Caco-2 (cell line): ENCODE measurements at regions of chr5 and their contacts with region 1.

Region 1: GRCh38 chr5:109688971-109689739 is 572 bp upstream of the MAN2A1 start:
- DNase-seq: peak; percentile 89 to 92
- H3K4me3 ChIP-seq: peak overlapping the region; percentile 86
- H3K4me3 Mint-ChIP-seq: peak overlapping the region; percentile 94
- H3K27ac Mint-ChIP-seq: peak overlapping the region; percentile 98
- H3K4me1 ChIP-seq: 0 out of 2 replicates have a peak, but pooled peaks cover 6% of the 10 kb centered on the region
- H3K4me1 Mint-ChIP-seq: peaks cover 15% of the 10 kb centered on the region
- H3K27me3 ChIP-seq: no peaks in the 10 kb centered on the region
- H3K27me3 Mint-ChIP-seq: no peaks in the 10 kb centered on the region
- CTCF ChIP-seq: no peak

Region 2: GRCh38 chr5:108481355-108481931 is 1207.7 kb before region 1 on chr5:
- CTCF ChIA-PET with region 1: no interaction called
- POLR2A ChIA-PET with region 1: no interaction called
- intact Hi-C with region 1: loop called (anchors 2 kb)
- DNase-seq: peak; percentile 35 to 51
- H3K4me3 ChIP-seq: no peak overlapping the region
- H3K4me3 Mint-ChIP-seq: no peak overlapping the region
- H3K27ac Mint-ChIP-seq: no peak overlapping the region
- H3K4me1 ChIP-seq: no peaks in the 10 kb centered on the region
- H3K4me1 Mint-ChIP-seq: no peaks in the 10 kb centered on the region
- H3K27me3 ChIP-seq: no peaks in the 10 kb centered on the region
- H3K27me3 Mint-ChIP-seq: peaks cover 10% of the 10 kb centered on the region
- CTCF ChIP-seq: peak; percentile 44 to 51

Region 3: DNA sequence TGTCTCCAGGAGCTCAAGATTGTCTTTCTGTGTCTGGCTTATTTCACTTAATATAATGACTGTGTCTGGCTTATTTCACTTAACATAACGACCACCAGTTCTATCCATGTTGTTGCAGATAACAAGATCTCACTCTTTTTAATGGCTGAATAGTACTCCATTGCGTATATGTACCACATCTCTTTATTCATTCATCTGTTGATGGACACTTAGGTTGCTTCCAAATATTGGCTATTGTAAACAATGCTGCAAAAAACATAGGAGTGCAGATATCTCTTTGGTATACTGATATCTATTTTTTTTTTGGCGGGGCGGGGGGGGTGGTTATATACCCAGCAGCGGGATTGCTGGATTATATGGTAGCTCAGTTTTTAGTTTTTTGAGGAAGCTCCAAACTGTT is 895.9 kb before region 1 on chr5:
- CTCF ChIA-PET with region 1: no interaction called
- POLR2A ChIA-PET with region 1: interaction called, 10 read pairs
- intact Hi-C with region 1: no loop called
- DNase-seq: no peak
- H3K4me3 ChIP-seq: no peak overlapping the region
- H3K4me3 Mint-ChIP-seq: no peak overlapping the region
- H3K27ac Mint-ChIP-seq: no peak overlapping the region
- H3K4me1 ChIP-seq: no peaks in the 10 kb centered on the region
- H3K4me1 Mint-ChIP-seq: no peaks in the 10 kb centered on the region
- H3K27me3 ChIP-seq: no peaks in the 10 kb centered on the region
- H3K27me3 Mint-ChIP-seq: no peaks in the 10 kb centered on the region
- CTCF ChIP-seq: no peak

Region 4: DNA sequence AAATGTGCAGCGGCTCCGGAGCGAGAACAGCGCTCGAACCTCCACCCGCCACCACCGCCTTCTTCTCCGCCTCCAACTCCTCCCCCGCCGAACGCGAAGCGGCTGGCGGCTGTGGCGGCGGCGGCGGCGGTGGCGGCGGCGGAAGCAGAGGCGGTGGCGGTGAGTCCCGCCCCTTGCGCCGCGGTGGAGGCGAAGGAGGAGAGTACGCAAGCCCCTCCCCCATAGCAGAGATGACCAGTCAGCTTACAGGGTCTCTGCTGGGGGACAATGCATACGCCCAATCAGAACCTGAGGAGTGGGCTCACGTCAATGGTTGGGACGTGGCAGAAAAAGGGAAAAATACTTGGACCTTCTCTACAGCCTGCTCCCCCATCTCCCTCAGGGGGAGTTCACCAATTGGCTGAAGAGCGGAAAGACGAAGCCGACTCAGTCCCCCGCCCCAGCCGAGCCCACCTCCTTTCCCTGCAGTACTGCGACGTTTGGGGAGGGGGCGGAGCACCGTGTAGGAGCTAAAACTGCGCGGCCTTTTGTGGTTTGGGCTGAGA is 279.2 kb before region 1 on chr5 and contains the start of gene PJA2:
- CTCF ChIA-PET with region 1: interaction called, 4 read pairs
- POLR2A ChIA-PET with region 1: no interaction called
- intact Hi-C with region 1: loop called (anchors 2 kb)
- DNase-seq: peak; percentile 99
- H3K4me3 ChIP-seq: peak within 1 kb of the TSS; percentile 83
- H3K4me3 Mint-ChIP-seq: peak within 1 kb of the TSS; percentile 94
- H3K27ac Mint-ChIP-seq: peak within 1 kb of the TSS; percentile 100
- H3K4me1 ChIP-seq: peaks cover 8% of the 10 kb centered on the region; the same call in 1 of the 2 replicates
- H3K4me1 Mint-ChIP-seq: peaks cover 6% of the 10 kb centered on the region
- H3K27me3 ChIP-seq: no peaks in the 10 kb centered on the region
- H3K27me3 Mint-ChIP-seq: no peaks in the 10 kb centered on the region
- CTCF ChIP-seq: peak; percentile 9 to 38
- total RNA-seq, gene PJA2: 34.2 and 34.7 TPM in 2 replicates

Region 5: GRCh38 chr5:109701781-109702180 is 12.6 kb after region 1 on chr5:
- CTCF ChIA-PET with region 1: interaction called, 3 read pairs
- POLR2A ChIA-PET with region 1: no interaction called
- intact Hi-C with region 1: loop called (anchors 1 kb)
- DNase-seq: no peak
- H3K4me3 ChIP-seq: no peak overlapping the region
- H3K4me3 Mint-ChIP-seq: no peak overlapping the region
- H3K27ac Mint-ChIP-seq: peak overlapping the region; percentile 2
- H3K4me1 ChIP-seq: peaks cover 19% of the 10 kb centered on the region
- H3K4me1 Mint-ChIP-seq: peaks cover 19% of the 10 kb centered on the region
- H3K27me3 ChIP-seq: no peaks in the 10 kb centered on the region
- H3K27me3 Mint-ChIP-seq: no peaks in the 10 kb centered on the region
- CTCF ChIP-seq: no peak

Region 6: GRCh38 chr5:109992264-109992915 is 303.2 kb after region 1 on chr5:
- CTCF ChIA-PET with region 1: interaction called, 3 read pairs
- POLR2A ChIA-PET with region 1: interaction called, 5 read pairs
- intact Hi-C with region 1: loop called (anchors 5 kb)
- DNase-seq: no peak
- H3K4me3 ChIP-seq: no peak overlapping the region
- H3K4me3 Mint-ChIP-seq: no peak overlapping the region
- H3K27ac Mint-ChIP-seq: no peak overlapping the region
- H3K4me1 ChIP-seq: peaks cover 43% of the 10 kb centered on the region
- H3K4me1 Mint-ChIP-seq: peaks cover 61% of the 10 kb centered on the region
- H3K27me3 ChIP-seq: no peaks in the 10 kb centered on the region
- H3K27me3 Mint-ChIP-seq: no peaks in the 10 kb centered on the region
- CTCF ChIP-seq: no peak